ENCODE measurements at regions of chr14 and their contacts with region 1.

Region 1: GRCh38 chr14:67650694-67651093 is 23.7 kb downstream of the VTI1B start:
- DNase-seq: no peak
- H3K4me3 ChIP-seq: no peak overlapping the region
- H3K27ac ChIP-seq: no peak overlapping the region
- H3K4me1 ChIP-seq: peaks cover 0 to 7% of the 10 kb centered on the region in 2 donors
- H3K27me3 ChIP-seq: no peaks in the 10 kb centered on the region
- CTCF ChIP-seq: no peak
- POLR2A ChIP-seq: no peak

Region 2: GRCh38 chr14:67609642-67610310 is 40.9 kb before region 1 on chr14:
- intact Hi-C with region 1: loop called in 1 of 2 experiments (anchors 5 kb)
- DNase-seq: no peak
- H3K4me3 ChIP-seq: no peak overlapping the region
- H3K27ac ChIP-seq: no peak overlapping the region
- H3K4me1 ChIP-seq: no peaks in the 10 kb centered on the region
- H3K27me3 ChIP-seq: no peaks in the 10 kb centered on the region
- CTCF ChIP-seq: no peak
- POLR2A ChIP-seq: no peak